BJ (cell line): ENCODE measurements at regions of chr10 and their contacts with region 1.

Region 1: DNA sequence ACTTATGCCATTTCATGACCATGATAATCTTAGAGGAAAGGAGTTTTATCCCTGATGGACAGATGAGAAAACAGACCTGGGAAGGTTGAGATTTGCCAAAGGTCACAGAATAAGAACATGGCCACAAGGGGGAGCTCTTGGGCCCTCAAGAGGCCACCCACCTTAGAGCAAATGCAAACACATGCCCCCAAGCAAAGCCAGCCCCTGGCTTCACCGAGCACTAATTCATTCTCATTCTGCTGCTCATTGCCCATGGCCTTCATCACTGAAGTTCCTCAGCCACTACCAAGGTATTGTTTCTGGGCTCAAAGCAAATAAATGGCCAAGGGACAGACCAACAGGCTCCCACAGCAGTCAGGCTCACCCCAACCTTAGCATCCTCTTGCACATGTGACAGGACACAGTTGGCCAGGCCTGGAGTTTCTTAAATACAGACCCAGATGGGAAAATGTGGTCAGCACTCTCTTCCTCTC is 44.2 kb downstream of the PDLIM1 start:
- DNase-seq: no peak
- H3K4me3 ChIP-seq: no peak overlapping the region
- H3K27me3 ChIP-seq: no peaks in the 10 kb centered on the region
- CTCF ChIP-seq: peak; percentile 81

Region 2: GRCh38 chr10:95168694-95169093 is 77.9 kb before region 1 on chr10:
- CTCF ChIA-PET with region 1: no interaction called
- POLR2A ChIA-PET with region 1: no interaction called
- DNase-seq: no peak
- H3K4me3 ChIP-seq: no peak overlapping the region
- H3K27me3 ChIP-seq: no peaks in the 10 kb centered on the region
- CTCF ChIP-seq: no peak

Region 3: DNA sequence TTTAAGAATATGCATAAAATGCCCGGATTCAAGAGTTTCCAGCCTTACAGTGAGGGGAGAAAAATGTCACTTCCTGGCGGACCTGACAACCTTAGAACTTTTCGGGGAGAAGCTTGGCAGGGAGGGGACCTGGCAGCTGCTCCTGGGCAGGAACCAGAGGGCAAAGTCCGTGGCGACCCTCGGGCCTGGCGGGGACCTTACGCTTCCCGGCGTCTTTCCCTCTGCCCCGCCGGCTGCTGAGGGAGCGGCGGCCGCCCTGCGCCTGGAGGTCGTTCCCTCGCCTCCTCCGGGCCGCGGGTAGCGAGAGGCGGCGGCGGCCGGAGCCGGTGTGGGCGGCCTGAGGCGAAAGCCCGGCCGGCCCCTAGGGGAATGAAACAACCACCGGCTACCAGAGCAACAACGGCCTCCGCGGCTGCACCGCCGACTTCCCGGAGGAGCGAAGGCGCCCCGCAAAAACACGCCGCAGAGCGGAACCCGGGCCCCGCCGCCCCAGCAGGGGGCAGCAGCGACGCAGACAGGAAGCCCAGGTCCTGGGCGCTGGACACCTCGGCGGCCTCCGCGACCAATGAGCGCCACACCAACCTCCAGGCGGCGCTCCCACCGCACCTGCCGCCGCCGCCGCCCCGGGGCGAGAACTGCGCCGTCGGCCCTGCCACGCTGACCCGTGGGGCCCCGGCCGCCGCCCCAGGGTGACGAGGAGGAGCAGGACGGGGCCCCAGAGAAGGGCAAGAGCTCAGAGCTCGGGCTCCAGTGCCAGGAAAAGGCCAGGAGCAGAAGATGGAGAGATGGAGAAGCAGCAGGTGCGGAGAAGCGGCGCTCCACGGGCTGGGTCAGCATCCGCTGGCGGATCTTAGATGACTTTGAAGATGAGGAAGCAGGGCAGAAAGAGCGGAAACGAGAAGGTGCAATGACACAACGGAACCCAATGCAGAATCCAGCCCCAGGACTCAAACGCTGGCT is 63.1 kb before region 1 on chr10:
- CTCF ChIA-PET with region 1: interaction called, 15 read pairs
- POLR2A ChIA-PET with region 1: no interaction called
- DNase-seq: peak; percentile 18
- H3K4me3 ChIP-seq: peak overlapping the region; percentile 52
- H3K27me3 ChIP-seq: no peaks in the 10 kb centered on the region
- CTCF ChIP-seq: peak; percentile 86

Region 4: DNA sequence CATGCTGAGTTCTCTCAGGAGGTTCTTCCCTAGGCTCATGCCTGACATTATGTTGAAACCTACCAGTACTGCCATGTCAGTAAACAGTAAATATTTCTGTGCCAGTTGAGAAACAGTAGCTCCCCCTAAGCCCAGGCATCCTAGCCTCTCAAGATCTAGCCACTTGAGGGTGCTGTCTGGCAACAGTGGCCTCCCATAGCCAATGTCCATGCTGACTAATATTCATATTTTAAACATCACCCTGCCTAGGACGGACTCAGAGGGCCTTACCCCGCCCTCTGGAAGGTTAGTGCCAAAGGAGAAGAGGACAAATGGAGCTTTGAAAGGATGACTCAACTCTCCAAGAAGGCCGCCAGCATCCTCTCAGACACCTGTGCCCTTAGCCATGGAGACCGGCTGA is 44.9 kb before region 1 on chr10:
- CTCF ChIA-PET with region 1: interaction called, 41 read pairs
- POLR2A ChIA-PET with region 1: no interaction called
- DNase-seq: no peak
- H3K4me3 ChIP-seq: no peak overlapping the region
- H3K27me3 ChIP-seq: no peaks in the 10 kb centered on the region
- CTCF ChIP-seq: peak; percentile 46

Region 5: DNA sequence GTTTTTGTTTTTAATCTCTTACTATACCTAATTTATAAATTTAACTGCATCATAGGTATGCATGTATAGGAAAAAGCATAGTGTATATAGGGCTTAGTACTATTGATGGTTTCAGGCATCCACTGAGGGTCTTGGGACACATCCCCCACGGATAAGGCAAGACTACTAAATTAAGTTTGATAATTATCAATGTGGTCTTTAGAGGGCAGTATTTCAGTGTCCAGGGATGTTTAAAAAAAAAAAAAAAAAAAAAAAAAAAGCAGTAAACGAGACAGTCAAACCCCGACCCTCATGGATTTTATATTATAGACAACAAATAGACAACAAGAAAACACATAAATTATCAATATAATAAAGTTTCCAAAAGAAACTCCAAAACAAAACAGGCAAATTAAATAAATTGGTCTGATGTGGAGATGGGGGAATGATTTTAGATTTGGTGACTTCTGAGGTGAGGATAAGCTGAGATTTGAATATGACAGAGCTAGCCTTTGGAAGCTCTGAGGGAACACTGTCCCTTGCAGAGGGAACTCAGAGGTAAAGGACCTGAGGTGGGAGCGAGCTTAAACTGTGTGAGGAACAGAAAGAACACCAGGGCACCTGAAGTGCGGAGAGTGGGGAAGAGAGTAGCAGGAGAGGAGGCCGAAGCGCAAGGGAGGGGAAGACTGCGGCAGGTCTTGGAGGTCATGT is 37.8 kb before region 1 on chr10:
- CTCF ChIA-PET with region 1: interaction called, 41 read pairs
- POLR2A ChIA-PET with region 1: no interaction called
- DNase-seq: no peak
- H3K4me3 ChIP-seq: no peak overlapping the region
- H3K27me3 ChIP-seq: no peaks in the 10 kb centered on the region
- CTCF ChIP-seq: peak; percentile 39; the same call in 1 of the 2 replicates

Region 6: DNA sequence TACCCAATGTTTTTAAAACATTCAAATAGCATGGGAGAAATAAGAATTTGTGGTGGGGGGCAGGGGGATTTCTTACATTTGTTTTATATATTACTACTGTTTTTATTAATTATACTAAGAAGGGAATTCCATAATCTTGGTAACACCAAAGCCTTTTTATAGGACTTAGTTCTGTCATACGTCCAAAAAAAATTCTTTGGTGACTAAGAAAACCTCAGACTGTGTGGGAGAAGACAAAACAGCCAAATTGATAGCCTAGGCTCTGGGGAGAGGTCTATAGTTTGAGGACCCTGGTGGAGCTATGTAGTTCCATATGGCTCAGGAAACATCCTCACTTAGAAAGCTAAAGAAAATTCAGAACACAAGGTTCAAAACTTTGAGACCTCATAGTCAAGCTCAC is 29.1 kb before region 1 on chr10:
- CTCF ChIA-PET with region 1: interaction called, 18 read pairs
- POLR2A ChIA-PET with region 1: interaction called, 3 read pairs
- DNase-seq: no peak
- H3K4me3 ChIP-seq: no peak overlapping the region
- H3K27me3 ChIP-seq: no peaks in the 10 kb centered on the region
- CTCF ChIP-seq: no peak

Region 7: GRCh38 chr10:95236068-95236903 is 10.3 kb before region 1 on chr10:
- CTCF ChIA-PET with region 1: interaction called, 31 read pairs
- POLR2A ChIA-PET with region 1: no interaction called
- DNase-seq: peak; percentile 74
- H3K4me3 ChIP-seq: no peak overlapping the region
- H3K27me3 ChIP-seq: no peaks in the 10 kb centered on the region
- CTCF ChIP-seq: no peak

Region 8: GRCh38 chr10:95374597-95375209 is 128.1 kb after region 1 on chr10:
- CTCF ChIA-PET with region 1: interaction called, 14 read pairs
- POLR2A ChIA-PET with region 1: no interaction called
- DNase-seq: no peak
- H3K4me3 ChIP-seq: no peak overlapping the region
- H3K27me3 ChIP-seq: peaks cover 5% of the 10 kb centered on the region
- CTCF ChIP-seq: peak; percentile 85